ENCODE measurements at regions of chr17 and their contacts with region 1.

Region 1: GRCh38 chr17:2609091-2609490 is 15.6 kb downstream of the PAFAH1B1 start:
- DNase-seq: no peak
- ATAC-seq: no peak
- H3K4me3 ChIP-seq: no peak overlapping the region
- H3K27ac ChIP-seq: no peak overlapping the region
- H3K4me1 ChIP-seq: peaks cover 9% of the 10 kb centered on the region
- H3K27me3 ChIP-seq: no peaks in the 10 kb centered on the region
- CTCF ChIP-seq: no peak

Region 2: DNA sequence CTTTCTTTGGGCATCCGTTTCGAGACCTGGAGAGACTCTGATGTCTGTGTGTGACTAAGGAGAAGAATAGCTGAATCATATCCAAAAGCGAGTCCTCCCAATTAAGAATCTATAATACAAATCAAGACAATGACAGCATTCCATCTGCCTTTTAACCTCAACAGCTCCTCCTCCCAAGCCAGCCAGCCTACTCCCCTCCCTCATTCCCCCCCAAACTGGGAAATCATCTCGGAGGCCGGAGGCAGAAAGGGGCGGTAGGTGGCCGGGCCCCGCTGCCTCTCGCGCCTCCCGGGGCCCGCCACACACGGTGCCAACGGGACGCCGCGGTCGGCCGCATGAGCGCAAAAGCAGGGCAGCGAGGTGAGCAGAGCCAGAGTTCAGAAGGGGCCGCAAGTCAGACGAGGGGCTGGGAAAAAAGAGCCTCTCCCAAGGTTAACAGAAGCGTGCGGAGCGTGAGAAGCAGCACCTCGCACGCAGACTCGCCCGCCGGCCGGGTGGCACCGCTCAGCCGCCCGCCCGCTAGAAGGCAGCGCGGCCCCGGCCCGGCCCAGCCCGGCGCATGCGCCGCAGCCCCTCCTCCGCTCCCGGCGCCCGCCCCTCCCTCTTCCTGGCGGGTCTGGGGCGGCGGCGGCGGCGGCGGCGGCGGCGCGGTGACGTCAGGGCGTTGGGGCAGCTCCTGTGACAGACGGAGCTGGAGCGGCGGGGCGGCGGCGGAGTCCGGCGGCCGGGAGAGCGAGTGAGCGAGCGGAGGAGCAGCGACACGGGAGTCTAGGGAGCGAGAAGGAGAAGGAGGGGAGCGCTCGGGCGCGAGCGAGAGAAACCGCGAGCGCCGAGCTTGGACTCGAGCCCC is 15.9 kb before region 1 on chr17 and contains the start of gene PAFAH1B1:
- CTCF ChIA-PET with region 1: no interaction called
- POLR2A ChIA-PET with region 1: no interaction called
- in situ Hi-C with region 1: no loop called
- intact Hi-C with region 1: no loop called
- DNase-seq: no peak
- ATAC-seq: peak; percentile 93
- H3K4me3 ChIP-seq: peak within 1 kb of the TSS; percentile 84 to 93
- H3K27ac ChIP-seq: peak within 1 kb of the TSS; percentile 91
- H3K4me1 ChIP-seq: peaks cover 13% of the 10 kb centered on the region
- H3K27me3 ChIP-seq: no peaks in the 10 kb centered on the region
- CTCF ChIP-seq: no peak
- total RNA-seq, gene PAFAH1B1: 120 TPM

Region 3: GRCh38 chr17:4120332-4120731 is 1511.2 kb after region 1 on chr17:
- CTCF ChIA-PET with region 1: no interaction called
- POLR2A ChIA-PET with region 1: interaction called, 11 read pairs
- in situ Hi-C with region 1: no loop called
- intact Hi-C with region 1: no loop called
- DNase-seq: no peak
- ATAC-seq: no peak
- H3K4me3 ChIP-seq: no peak overlapping the region
- H3K27ac ChIP-seq: no peak overlapping the region
- H3K4me1 ChIP-seq: no peaks in the 10 kb centered on the region
- H3K27me3 ChIP-seq: no peaks in the 10 kb centered on the region
- CTCF ChIP-seq: no peak